ENCODE measurements at regions of chr12 and their contacts with region 1.

Region 1: DNA sequence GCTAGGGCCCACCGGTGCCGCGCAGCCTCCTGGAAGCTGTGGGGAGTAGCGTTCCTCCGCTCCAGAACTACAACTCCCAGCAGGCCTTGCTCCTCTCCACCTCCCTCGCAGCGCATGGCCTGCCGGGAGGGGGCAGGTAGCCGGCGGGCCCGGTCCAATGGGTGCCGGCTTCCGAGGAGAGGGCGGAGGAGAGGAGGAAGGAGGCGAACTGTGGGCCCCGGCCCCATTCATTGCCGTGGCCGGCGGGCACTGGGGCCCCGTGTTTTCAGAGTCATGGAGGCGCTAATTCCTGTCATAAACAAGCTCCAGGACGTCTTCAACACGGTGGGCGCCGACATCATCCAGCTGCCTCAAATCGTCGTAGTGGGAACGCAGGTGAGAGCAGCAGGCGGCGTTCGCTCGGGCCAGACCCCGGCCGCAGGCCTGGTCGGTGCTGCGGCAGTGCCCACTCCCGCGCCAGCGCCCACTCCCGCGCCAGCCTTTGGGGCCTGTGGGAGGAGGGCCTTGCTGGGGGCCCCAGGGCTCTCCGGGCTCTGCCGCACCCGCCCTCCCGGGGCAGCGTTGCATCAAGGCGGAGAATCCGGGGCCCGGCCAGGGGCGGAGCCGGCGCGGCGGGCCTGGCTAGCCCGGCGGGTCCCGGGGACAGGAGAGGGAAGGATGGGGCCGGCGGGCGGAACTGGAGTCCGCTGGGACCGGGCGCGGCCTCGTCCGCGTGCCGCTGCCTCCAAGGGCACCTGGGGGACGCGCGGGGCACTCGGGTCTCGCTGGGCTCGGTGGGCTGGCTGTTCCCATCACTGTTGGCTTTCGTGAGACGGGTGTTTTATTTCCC is at the start of gene DNM1L:
- DNase-seq: peak; percentile 95 to 96 (median 95)
- ATAC-seq: peak; percentile 99
- H3K4me3 ChIP-seq: peak within 1 kb of the TSS; percentile 87
- H3K4me1 ChIP-seq: peaks cover 17% of the 10 kb centered on the region
- CTCF ChIP-seq: no peak
- total RNA-seq, gene DNM1L: 58.8 to 64.9 (median 62.6) TPM

Region 2: DNA sequence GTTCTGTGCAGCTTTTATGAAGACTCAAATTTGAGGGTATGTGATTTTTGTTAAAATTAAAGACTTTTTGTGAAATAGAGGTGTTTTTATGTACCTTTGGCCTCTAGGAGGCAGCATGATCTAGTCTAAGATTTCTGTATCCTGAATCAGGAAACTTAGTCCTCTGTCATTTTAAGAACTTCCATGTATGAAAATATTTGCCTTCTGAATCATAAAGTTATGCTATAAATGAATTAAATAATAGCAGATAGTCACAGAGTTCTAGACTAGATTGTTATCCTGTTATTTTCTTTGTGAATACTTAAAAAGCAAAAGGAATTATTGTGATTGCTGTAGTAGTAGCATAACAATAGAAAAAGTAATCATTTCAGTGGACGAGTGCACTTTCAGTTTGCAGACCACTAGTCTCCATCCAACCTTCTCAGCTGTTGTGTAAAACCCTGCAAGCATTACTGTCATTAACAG is 223.7 kb before region 1 on chr12:
- intact Hi-C with region 1: loop called (anchors 10 kb)
- DNase-seq: peak in 1 of 3 donors; percentile 71
- ATAC-seq: peak; percentile 62
- H3K4me3 ChIP-seq: no peak overlapping the region
- H3K4me1 ChIP-seq: peaks cover 13% of the 10 kb centered on the region
- CTCF ChIP-seq: peak; percentile 23

Region 3: DNA sequence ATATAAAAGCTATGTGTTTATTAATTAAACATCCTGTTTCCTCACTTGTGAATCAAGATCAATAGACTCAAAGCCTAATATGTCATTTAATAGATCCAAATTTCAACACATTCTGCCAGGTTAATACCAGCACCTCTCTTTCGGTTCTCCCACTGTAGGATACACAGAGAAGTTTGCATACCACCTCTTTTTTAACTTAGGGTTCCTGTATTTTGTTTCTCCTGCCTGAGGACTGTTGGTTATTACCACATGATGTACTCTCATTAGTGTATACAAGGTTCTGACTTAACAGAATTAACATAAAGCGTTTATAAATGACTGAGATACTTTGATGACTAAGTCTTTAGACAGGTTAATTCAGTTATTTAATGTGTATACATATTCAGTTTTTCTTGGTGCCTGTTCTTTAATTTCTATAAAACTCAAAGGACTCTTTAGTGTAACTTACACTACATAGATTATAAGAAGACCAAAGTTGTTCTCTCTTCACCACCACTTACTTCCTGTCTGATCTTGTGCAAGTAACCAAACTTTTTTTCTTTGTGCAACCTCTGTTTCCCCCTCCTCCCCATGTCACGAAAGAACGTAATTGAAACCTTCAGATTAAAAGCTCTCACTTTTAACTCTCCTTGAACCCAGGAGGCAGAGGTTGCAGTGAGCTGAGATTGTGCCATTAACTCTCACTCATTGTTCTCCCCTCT is 90.0 kb before region 1 on chr12:
- intact Hi-C with region 1: no loop called
- DNase-seq: no peak
- ATAC-seq: peak; percentile 54
- H3K4me3 ChIP-seq: no peak overlapping the region
- H3K4me1 ChIP-seq: no peaks in the 10 kb centered on the region
- CTCF ChIP-seq: no peak

Region 4: GRCh38 chr12:32794281-32794680 is 115.0 kb after region 1 on chr12:
- intact Hi-C with region 1: no loop called
- DNase-seq: no peak
- ATAC-seq: no peak
- H3K4me3 ChIP-seq: no peak overlapping the region
- H3K4me1 ChIP-seq: no peaks in the 10 kb centered on the region
- CTCF ChIP-seq: no peak

Measured in mucosa of descending colon (tissue), 3 donors.